Dendritic cell treated with granulocyte-macrophage colony-stimulating factor and Interleukin-4, amounts not matched to agents 40 ng/mL and 50 ng/mL, for 4 days (primary cell): ENCODE measurements at regions of chr10 and their contacts with region 1.

Region 1: DNA sequence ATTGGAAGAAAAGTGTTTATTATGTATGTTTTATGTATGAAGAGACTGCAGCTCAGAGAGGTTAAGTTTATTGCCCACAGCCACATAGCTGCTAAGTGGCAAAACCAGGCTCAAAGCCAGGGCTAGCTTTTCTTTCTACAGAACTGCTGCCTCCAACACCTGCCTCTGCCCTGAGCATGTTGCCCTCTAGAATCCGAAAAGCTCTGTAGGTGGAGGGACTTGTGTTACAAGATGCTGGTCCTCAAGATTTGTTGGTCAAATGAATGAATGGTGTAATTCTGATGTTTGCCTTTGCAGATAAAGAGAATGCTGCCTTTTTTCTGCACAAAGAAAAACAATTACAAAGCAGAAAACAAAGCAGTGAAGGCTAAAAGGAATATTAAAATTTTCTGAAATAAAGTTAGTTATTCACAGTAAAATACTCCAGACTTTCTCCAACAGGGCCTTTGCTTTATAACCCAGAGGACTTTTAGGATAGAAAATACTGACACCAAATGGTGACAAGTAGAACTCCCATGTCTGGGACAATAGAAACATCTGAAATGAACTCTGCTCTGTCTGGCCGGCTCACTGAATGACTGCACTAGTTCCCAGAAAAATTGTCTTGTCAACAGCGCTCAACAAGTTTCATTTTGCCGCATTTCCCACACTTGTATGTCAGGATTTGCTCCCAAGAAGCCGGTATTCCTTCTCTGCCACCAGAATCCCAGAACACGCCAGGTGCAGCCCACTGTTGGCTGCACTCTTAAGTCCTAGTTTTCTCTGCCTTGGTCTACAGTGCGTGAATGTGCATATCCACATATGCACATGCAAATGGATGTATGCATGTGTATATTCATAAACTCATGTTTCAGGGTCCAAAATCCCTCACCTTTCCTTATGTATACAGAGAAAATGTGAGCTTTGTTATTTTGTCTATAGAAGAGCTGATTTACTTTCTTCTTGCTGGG is 11.0 kb upstream of the DNTT start:
- H3K4me3 Mint-ChIP-seq: no peak overlapping the region
- H3K27ac Mint-ChIP-seq: no peak overlapping the region
- H3K4me1 Mint-ChIP-seq: peaks cover 35% of the 10 kb centered on the region
- H3K27me3 Mint-ChIP-seq: no peaks in the 10 kb centered on the region

Region 2: GRCh38 chr10:96017191-96017687 is 276.0 kb before region 1 on chr10:
- intact Hi-C with region 1: loop called (anchors 2 kb)
- H3K4me3 Mint-ChIP-seq: no peak overlapping the region
- H3K27ac Mint-ChIP-seq: no peak overlapping the region
- H3K4me1 Mint-ChIP-seq: no peaks in the 10 kb centered on the region
- H3K27me3 Mint-ChIP-seq: no peaks in the 10 kb centered on the region

Region 3: GRCh38 chr10:96229568-96230030 is 63.6 kb before region 1 on chr10:
- intact Hi-C with region 1: loop called (anchors 1 kb)
- H3K4me3 Mint-ChIP-seq: no peak overlapping the region
- H3K27ac Mint-ChIP-seq: no peak overlapping the region
- H3K4me1 Mint-ChIP-seq: peaks cover 16% of the 10 kb centered on the region
- H3K27me3 Mint-ChIP-seq: no peaks in the 10 kb centered on the region

Region 4: GRCh38 chr10:96271016-96271829 is 22.0 kb before region 1 on chr10 and contains the start of gene BLNK:
- intact Hi-C with region 1: loop called (anchors 2 kb)
- H3K4me3 Mint-ChIP-seq: peak within 1 kb of the TSS; percentile 78
- H3K27ac Mint-ChIP-seq: peak within 1 kb of the TSS; percentile 93
- H3K4me1 Mint-ChIP-seq: peaks cover 58% of the 10 kb centered on the region
- H3K27me3 Mint-ChIP-seq: no peaks in the 10 kb centered on the region